ENCODE measurements at regions of chr10 and their contacts with region 1.

Region 1: GRCh38 chr10:5948999-5949759 is 28.2 kb downstream of the IL15RA start:
- DNase-seq: peak; percentile 71
- ATAC-seq: peak; percentile 53
- H3K4me3 ChIP-seq: no peak overlapping the region
- H3K27ac ChIP-seq: no peak overlapping the region
- H3K4me1 ChIP-seq: peaks cover 26% of the 10 kb centered on the region
- H3K27me3 ChIP-seq: no peaks in the 10 kb centered on the region
- CTCF ChIP-seq: peak; percentile 66
- POLR2A ChIP-seq: no peak
- RAD21 ChIP-seq: peak; percentile 79

Region 2: GRCh38 chr10:5960070-5960972 is 11.1 kb after region 1 on chr10:
- CTCF ChIA-PET with region 1: interaction called, 3 read pairs
- POLR2A ChIA-PET with region 1: interaction called, 18 read pairs
- dilution Hi-C with region 1: no loop called
- in situ Hi-C with region 1: no loop called
- intact Hi-C with region 1: no loop called
- DNase-seq: peak; percentile 73
- ATAC-seq: peak; percentile 79
- H3K4me3 ChIP-seq: no peak overlapping the region
- H3K27ac ChIP-seq: no peak overlapping the region
- H3K4me1 ChIP-seq: peaks cover 18% of the 10 kb centered on the region
- H3K27me3 ChIP-seq: no peaks in the 10 kb centered on the region
- CTCF ChIP-seq: no peak
- POLR2A ChIP-seq: no peak
- RAD21 ChIP-seq: no peak

Region 3: DNA sequence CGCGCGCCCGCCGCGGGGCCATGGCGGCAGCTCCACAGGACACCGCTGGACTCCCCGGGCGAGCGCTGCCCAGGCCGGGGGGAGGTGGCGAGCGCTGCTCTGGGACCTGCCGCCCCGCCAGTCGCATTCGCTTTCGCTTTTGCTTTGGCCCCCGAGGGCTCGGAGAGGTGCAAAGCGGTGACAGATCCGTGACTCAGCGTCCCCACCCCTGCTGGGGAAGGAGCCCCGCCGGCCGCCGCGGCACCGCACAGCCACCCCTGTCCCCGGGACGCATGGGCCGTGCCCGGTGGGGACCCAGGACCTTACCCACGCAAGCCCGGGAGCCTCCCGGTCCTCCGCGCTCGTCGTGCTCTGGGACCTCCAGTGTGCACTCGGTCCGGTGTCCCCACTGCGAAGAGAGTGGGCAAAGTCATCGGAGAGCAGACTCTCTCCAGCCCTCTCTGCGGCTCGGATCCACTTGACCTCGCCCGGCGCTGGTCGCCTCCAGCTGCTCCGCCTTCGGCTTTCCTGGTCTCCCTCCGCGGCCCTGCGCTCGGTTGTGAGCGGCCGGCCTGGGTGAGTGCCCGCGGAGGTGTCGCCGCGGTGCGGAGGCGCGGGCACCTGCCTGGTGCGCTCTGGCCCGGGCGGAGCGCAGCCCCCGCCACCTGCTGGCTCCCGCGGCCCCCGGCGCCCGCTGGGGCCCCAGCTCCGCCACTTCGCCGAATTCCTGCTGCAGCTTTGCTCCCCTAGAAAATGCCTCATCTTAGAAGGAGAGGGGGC is 28.5 kb after region 1 on chr10 and contains the start of gene IL15RA:
- CTCF ChIA-PET with region 1: no interaction called
- POLR2A ChIA-PET with region 1: no interaction called
- dilution Hi-C with region 1: no loop called
- in situ Hi-C with region 1: no loop called
- intact Hi-C with region 1: loop called (anchors 2 kb)
- DNase-seq: peak; percentile 72
- ATAC-seq: peak; percentile 82
- H3K4me3 ChIP-seq: peak within 1 kb of the TSS; percentile 68
- H3K27ac ChIP-seq: peak within 1 kb of the TSS; percentile 61
- H3K4me1 ChIP-seq: peaks cover 3% of the 10 kb centered on the region; the same call in 1 of the 2 replicates
- H3K27me3 ChIP-seq: no peaks in the 10 kb centered on the region
- CTCF ChIP-seq: 0 out of 2 replicates have a peak, but pooled peaks have one; percentile 9
- POLR2A ChIP-seq: no peak
- RAD21 ChIP-seq: no peak
- total RNA-seq, gene IL15RA: 1.4 and 2.0 TPM in 2 replicates

Region 4: DNA sequence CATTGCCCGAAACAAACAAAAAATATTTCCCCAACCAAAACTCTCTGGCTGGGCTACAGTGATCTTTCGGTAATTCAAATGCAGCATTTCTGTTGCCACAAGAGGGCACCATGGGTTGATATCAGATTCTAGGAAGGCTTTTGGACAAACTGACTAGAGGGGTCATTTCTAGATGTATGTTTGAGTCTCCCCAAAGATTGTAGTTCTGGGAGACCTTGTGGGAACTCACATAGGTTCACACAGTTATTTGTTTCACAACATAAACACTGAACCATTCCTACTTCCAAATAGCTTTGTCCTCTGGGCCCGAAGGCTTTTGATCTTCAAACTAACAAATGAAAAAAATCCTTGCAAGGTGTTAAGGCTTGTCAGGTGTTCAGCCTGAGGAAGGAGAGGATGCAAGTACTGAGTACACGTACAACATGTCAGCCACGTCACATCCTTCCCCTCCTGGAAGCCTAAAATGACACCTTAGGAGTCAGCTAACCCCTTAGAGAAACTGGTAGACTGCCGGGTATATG is 65.1 kb after region 1 on chr10:
- CTCF ChIA-PET with region 1: no interaction called
- POLR2A ChIA-PET with region 1: no interaction called
- dilution Hi-C with region 1: no loop called
- in situ Hi-C with region 1: no loop called
- intact Hi-C with region 1: loop called (anchors 1 kb)
- DNase-seq: peak; percentile 42
- ATAC-seq: peak; percentile 75
- H3K4me3 ChIP-seq: no peak overlapping the region
- H3K27ac ChIP-seq: no peak overlapping the region
- H3K4me1 ChIP-seq: peaks cover 4% of the 10 kb centered on the region
- H3K27me3 ChIP-seq: peaks cover 11% of the 10 kb centered on the region
- CTCF ChIP-seq: peak; percentile 68
- POLR2A ChIP-seq: no peak
- RAD21 ChIP-seq: peak; percentile 60

Region 5: DNA sequence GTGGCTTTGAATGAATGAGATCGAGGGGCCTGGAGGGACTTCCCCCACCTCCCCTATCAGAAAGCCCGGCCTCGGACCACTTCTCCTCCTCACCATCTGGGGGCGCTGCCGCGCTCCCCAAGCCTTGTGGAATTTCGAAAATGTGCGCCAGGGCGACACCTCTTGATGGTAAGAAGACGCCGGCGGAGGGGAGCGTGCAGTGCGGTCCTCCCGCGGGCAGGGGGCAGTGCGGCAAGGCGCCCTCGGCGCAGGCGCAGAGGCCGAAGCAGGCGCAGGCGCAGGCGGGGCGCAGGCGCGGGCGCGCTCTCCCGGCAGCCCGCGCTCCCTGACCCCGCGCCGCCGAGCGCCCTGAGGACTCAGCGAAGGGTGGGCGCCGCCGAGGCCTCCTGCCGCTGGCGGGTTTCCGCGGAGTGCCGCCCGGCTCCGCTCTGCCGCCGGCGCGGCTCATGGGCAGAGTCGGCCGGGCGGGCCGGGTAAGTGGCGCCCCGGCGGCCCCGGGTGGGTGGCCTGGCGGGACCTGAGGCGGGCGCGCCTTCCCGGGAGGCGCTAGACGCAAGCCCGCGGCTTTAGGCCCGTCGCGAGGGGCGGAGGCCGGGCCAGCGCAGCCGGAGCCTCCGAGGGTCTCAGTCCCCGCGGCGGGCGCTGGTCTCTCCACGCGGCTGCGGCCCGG is 139.7 kb after region 1 on chr10 and contains the start of gene RBM17:
- CTCF ChIA-PET with region 1: interaction called, 5 read pairs
- POLR2A ChIA-PET with region 1: no interaction called
- dilution Hi-C with region 1: no loop called
- in situ Hi-C with region 1: no loop called
- intact Hi-C with region 1: loop called (anchors 2 kb)
- DNase-seq: peak; percentile 97
- ATAC-seq: peak; percentile 96
- H3K4me3 ChIP-seq: peak within 1 kb of the TSS; percentile 99
- H3K27ac ChIP-seq: peak within 1 kb of the TSS; percentile 91
- H3K4me1 ChIP-seq: peaks cover 14% of the 10 kb centered on the region
- H3K27me3 ChIP-seq: no peaks in the 10 kb centered on the region
- CTCF ChIP-seq: peak; percentile 100
- POLR2A ChIP-seq: peak; percentile 50; the same call in 1 of the 2 replicates
- RAD21 ChIP-seq: peak; percentile 68
- total RNA-seq, gene RBM17: 24.6 and 35.6 TPM in 2 replicates

Region 6: DNA sequence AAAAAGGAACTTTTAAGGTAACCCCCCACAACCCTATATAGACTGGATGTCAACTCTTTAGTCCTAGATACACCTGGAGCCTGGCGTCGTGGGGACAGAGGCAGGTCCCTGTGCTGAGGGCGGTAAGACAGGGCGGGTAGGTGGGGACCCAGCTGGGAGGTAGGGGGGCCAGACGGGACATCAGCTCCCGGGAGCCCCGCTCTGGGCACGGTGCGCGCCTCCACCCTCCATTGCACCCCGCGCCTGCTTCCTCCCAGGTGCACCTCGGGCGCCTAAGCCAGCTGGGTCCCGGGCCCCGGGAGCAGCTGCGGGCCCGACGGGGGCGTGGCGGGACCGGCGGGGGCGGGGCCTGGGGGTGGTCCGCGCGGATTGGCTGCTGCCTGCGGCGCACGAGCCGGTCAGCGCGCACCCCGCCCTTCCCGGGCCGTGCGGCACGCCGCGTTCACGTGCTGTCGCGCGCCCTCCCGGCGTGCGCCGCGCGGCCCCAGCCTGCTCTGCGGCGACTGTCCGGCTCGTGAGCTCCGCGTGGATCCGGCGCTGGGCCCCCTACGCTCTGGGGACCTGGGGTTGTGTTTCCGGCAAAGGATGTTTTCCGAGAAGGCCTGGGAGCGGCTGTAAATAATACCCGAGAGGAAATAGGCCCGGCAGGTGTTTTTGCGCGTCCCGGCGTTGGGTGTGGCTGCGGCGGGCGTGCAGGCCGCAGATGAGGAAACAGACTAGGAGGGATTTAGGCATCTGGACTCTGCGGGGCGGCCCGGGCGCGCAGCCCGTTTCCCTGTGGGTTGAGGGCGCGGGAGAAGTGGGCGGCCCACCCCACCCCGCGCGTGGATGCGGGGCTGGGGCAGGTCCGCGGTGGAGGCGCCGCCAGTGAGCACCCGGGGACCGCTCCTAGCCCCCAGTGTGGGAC is 214.4 kb after region 1 on chr10:
- CTCF ChIA-PET with region 1: no interaction called
- POLR2A ChIA-PET with region 1: no interaction called
- dilution Hi-C with region 1: no loop called
- in situ Hi-C with region 1: no loop called
- intact Hi-C with region 1: loop called (anchors 10 kb)
- DNase-seq: peak; percentile 84
- ATAC-seq: peak; percentile 97
- H3K4me3 ChIP-seq: peak overlapping the region; percentile 85
- H3K27ac ChIP-seq: peak overlapping the region; percentile 55
- H3K4me1 ChIP-seq: peaks cover 11% of the 10 kb centered on the region
- H3K27me3 ChIP-seq: no peaks in the 10 kb centered on the region
- CTCF ChIP-seq: no peak
- POLR2A ChIP-seq: peak; percentile 44; the same call in 1 of the 2 replicates
- RAD21 ChIP-seq: no peak

Measured in IMR-90 (cell line).